ENCODE measurements at regions of chr9 and their contacts with region 1.

Region 1: GRCh38 chr9:104968025-104968982 is 40.3 kb upstream of the ABCA1 start:
- DNase-seq: peak; percentile 88 to 96 (median 96)
- ATAC-seq: peak; percentile 98 to 99
- H3K4me3 ChIP-seq: peak overlapping the region; percentile 75
- H3K27ac ChIP-seq: peak overlapping the region; percentile 94
- H3K4me1 ChIP-seq: no peaks in the 10 kb centered on the region
- H3K27me3 ChIP-seq: no peaks in the 10 kb centered on the region

Region 2: DNA sequence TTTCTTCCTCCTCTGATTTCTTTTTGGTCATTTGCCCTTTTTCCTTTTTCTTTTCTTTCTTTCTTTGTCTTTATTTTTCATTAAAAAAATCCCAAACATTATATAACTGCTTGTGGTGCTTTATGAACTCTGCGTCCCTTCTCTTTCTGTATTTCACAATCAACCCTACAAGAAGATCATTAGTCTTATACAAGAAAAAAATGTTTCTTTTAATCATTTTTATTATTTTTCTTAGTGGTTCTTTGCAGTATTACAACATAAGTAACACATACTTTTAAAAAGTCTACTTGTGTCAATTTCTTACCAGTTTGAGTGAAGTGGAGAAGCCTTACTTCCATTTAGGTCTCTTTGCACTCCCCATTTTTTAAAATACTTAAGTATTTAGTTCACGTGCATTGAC is 1086.9 kb before region 1 on chr9:
- intact Hi-C with region 1: no loop called
- DNase-seq: no peak
- ATAC-seq: no peak
- H3K4me3 ChIP-seq: no peak overlapping the region
- H3K27ac ChIP-seq: no peak overlapping the region
- H3K4me1 ChIP-seq: no peaks in the 10 kb centered on the region
- H3K27me3 ChIP-seq: no peaks in the 10 kb centered on the region

Region 3: DNA sequence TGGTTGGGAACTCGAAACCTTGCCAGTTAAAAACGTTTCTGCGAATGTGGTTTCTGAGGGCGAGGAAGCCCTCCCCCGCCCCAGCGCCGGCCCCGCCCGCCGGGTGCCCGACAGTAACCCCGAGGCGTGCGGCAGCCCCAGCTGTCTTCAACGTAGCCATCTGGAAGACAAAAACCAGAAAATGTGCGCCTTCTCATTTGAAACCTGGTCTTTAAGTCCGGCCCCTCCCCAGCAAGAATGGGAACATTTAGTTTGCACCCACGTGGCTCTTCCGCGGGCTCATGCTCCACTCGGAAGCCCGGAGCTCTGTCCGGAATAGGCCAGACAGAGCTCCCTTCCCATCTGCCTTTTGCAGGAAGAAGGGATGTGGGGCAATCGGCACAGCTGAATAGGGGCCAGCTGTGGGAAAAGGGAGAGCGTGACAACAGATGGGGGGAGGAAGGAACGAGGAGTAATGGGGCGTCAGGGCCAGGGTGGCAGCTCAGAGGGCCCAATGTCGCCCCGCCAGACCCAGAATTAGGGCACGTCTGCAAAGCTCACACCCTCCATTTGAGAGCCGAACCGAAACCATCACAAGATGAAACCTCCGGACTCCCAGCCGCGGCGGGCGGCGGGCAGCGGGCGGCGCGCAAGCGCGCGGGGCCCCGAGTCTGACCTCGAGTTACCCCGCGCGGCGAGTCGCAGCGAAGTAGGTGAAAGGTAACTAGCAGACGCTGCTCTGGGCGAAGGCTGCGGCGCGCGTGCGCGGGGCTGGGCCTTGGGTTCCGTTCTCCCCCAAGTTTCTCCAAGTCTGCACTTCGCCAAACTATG is 23.0 kb after region 1 on chr9:
- intact Hi-C with region 1: loop called in 1 of 4 experiments (anchors 2 kb)
- DNase-seq: peak; percentile 93 to 97 (median 97)
- ATAC-seq: peak; percentile 92 to 94
- H3K4me3 ChIP-seq: peak overlapping the region; percentile 42
- H3K27ac ChIP-seq: peak overlapping the region; percentile 94
- H3K4me1 ChIP-seq: peaks cover 14% of the 10 kb centered on the region
- H3K27me3 ChIP-seq: no peaks in the 10 kb centered on the region